OCI-LY7 (cell line): ENCODE measurements at regions of chr3 and their contacts with region 1.

Region 1: GRCh38 chr3:49411968-49412631 is at the starts of genes RHOA and TCTA:
- DNase-seq: peak; percentile 100
- H3K4me3 ChIP-seq: peak within 1 kb of the TSS; percentile 91
- H3K27ac ChIP-seq: peak within 1 kb of the TSS; percentile 79
- H3K4me1 ChIP-seq: peaks cover 65% of the 10 kb centered on the region
- CTCF ChIP-seq: no peak
- total RNA-seq, gene RHOA: 218 and 219 TPM in 2 replicates
- total RNA-seq, gene TCTA: 15.8 and 17.9 TPM in 2 replicates

Region 2: DNA sequence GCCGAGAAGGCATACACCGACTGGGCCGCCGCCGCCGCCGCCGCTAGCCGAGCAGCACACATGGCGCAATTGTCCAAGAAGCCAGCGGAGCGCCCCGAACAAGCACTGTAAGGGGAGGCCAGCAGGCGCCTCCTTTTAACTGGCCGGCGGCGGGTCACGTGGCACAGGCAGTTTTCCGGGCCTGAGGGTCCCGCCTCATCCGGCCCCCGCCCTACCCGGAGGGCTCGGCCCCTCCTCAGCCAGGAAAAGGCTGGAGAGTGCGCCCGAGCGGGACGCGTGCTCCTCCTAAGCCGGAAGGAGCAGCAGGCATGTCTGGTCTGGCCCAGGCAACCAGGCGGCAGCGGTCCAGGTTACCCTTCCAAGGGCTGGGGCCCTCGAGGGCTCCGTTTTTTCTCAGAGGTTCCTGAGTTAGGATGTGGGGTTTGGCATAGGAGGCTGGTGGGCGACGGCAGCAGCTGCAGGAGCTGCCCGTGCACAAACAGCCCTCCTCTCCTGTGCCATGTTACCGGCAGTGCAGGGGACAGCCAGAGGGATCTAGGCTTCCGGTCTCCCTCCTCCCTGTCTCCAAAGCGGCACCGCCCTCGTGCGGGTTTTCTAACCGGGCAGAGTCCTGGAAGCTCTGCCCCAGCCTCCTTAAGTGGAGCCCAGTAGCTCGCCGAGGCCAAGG is 53.8 kb before region 1 on chr3 and contains the start of gene GPX1:
- CTCF ChIA-PET with region 1: interaction called, 3 read pairs
- POLR2A ChIA-PET with region 1: interaction called, 5 read pairs
- intact Hi-C with region 1: loop called (anchors 2 kb)
- DNase-seq: peak; percentile 90
- H3K4me3 ChIP-seq: peak within 1 kb of the TSS; percentile 68
- H3K27ac ChIP-seq: peak within 1 kb of the TSS; percentile 76
- H3K4me1 ChIP-seq: peaks cover 31% of the 10 kb centered on the region
- CTCF ChIP-seq: no peak
- total RNA-seq, gene GPX1: 77.6 and 82.3 TPM in 2 replicates

Region 3: DNA sequence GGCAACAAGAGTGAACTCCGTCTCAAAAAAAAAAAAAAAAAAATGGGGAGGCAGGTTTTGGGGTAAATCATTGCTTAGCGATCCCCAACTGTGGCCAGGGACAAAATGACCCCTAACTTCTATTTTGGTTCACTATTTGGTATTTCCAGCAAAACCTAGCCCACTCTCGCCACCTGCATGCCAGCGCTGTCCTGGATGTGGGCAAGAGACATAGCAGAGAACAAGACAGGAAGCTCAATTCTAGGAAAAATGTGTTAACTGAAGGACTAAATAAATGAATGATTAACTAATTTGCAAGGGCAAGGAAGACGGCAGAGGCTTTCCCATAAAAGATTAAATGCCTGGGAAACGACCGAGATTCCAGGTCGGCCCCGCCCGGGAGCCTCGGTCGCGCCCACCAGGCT is 16.6 kb after region 1 on chr3:
- CTCF ChIA-PET with region 1: interaction called, 4 read pairs
- POLR2A ChIA-PET with region 1: interaction called, 12 read pairs
- intact Hi-C with region 1: loop called (anchors 1 kb)
- DNase-seq: peak; percentile 31
- H3K4me3 ChIP-seq: peak overlapping the region; percentile 71
- H3K27ac ChIP-seq: peak overlapping the region; percentile 82
- H3K4me1 ChIP-seq: peaks cover 14% of the 10 kb centered on the region
- CTCF ChIP-seq: no peak

Region 4: GRCh38 chr3:49445381-49445780 is 33.3 kb after region 1 on chr3:
- CTCF ChIA-PET with region 1: interaction called, 7 read pairs
- POLR2A ChIA-PET with region 1: interaction called, 10 read pairs
- intact Hi-C with region 1: loop called (anchors 1 kb)
- DNase-seq: no peak
- H3K4me3 ChIP-seq: no peak overlapping the region
- H3K27ac ChIP-seq: no peak overlapping the region
- H3K4me1 ChIP-seq: peaks cover 31% of the 10 kb centered on the region
- CTCF ChIP-seq: no peak

Region 5: GRCh38 chr3:49454458-49454857 is 42.4 kb after region 1 on chr3:
- CTCF ChIA-PET with region 1: interaction called, 7 read pairs
- POLR2A ChIA-PET with region 1: interaction called, 10 read pairs
- intact Hi-C with region 1: loop called (anchors 1 kb)
- DNase-seq: peak; percentile 53
- H3K4me3 ChIP-seq: no peak overlapping the region
- H3K27ac ChIP-seq: no peak overlapping the region
- H3K4me1 ChIP-seq: no peaks in the 10 kb centered on the region
- CTCF ChIP-seq: peak; percentile 68

Region 6: GRCh38 chr3:49469936-49470713 is 58.0 kb after region 1 on chr3 and contains the start of gene DAG1:
- CTCF ChIA-PET with region 1: interaction called, 13 read pairs
- POLR2A ChIA-PET with region 1: interaction called, 3 read pairs
- intact Hi-C with region 1: no loop called
- DNase-seq: peak; percentile 97
- H3K4me3 ChIP-seq: peak within 1 kb of the TSS; percentile 90
- H3K27ac ChIP-seq: peak within 1 kb of the TSS; percentile 80
- H3K4me1 ChIP-seq: peaks cover 22% of the 10 kb centered on the region
- CTCF ChIP-seq: no peak
- total RNA-seq, gene DAG1: 10.6 and 10.9 TPM in 2 replicates

Region 7: GRCh38 chr3:49719214-49719884 is 307.2 kb after region 1 on chr3 and contains the start of gene AMIGO3:
- CTCF ChIA-PET with region 1: no interaction called
- POLR2A ChIA-PET with region 1: no interaction called
- intact Hi-C with region 1: no loop called
- DNase-seq: peak; percentile 90
- H3K4me3 ChIP-seq: peak within 1 kb of the TSS; percentile 51
- H3K27ac ChIP-seq: peak within 1 kb of the TSS; percentile 27
- H3K4me1 ChIP-seq: peaks cover 15% of the 10 kb centered on the region
- CTCF ChIP-seq: peak; percentile 67
- total RNA-seq, gene AMIGO3: 2.9 and 4.4 TPM in 2 replicates